Calu3 (cell line): ENCODE measurements at regions of chr3 and their contacts with region 1.

Region 1: GRCh38 chr3:46558184-46559043 is 7.7 kb downstream of the LRRC2 start:
- DNase-seq: peak; percentile 91
- H3K4me3 Mint-ChIP-seq: peak overlapping the region; percentile 80
- H3K27ac Mint-ChIP-seq: peak overlapping the region; percentile 51
- H3K4me1 Mint-ChIP-seq: peaks cover 23% of the 10 kb centered on the region
- H3K27me3 Mint-ChIP-seq: no peaks in the 10 kb centered on the region
- CTCF ChIP-seq: peak; percentile 53

Region 2: GRCh38 chr3:46423588-46423987 is 134.8 kb before region 1 on chr3:
- CTCF ChIA-PET with region 1: no interaction called
- intact Hi-C with region 1: no loop called
- DNase-seq: peak; percentile 42
- H3K4me3 Mint-ChIP-seq: no peak overlapping the region
- H3K27ac Mint-ChIP-seq: peak overlapping the region; percentile 63
- H3K4me1 Mint-ChIP-seq: peaks cover 26% of the 10 kb centered on the region
- H3K27me3 Mint-ChIP-seq: no peaks in the 10 kb centered on the region
- CTCF ChIP-seq: no peak

Region 3: DNA sequence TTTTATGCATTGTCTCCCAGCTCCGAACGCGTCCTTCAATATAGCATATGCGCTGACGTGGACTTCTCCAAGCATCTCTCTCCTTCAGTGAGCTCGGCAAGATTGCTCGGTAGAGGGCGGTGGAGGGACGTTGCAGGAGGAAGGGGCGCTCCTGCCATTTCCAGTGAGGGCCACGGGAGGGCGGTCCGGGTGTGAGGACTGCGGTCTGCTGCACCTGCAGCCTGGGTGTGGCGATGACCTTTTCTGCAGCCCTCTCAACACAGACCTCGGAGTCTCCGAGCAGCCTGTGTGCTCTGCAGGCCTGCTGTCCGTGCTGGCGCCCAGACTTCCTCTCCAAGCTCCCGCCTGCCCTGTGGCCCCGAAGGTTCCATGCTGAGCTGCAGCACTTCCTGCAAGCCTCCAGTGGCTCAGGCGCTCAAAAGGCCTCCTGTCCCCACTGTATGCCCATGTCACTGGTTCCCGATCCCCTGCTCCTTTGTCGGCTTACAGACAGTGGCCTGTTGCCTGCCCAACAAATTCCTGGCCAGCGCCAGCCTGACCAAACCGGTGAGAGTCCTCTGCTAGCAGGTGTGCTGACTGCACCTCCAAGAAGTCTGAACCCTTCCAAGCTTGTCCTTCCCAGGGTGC is 69.6 kb before region 1 on chr3:
- CTCF ChIA-PET with region 1: interaction called, 81 read pairs
- intact Hi-C with region 1: loop called (anchors 1 kb)
- DNase-seq: peak; percentile 96
- H3K4me3 Mint-ChIP-seq: peak overlapping the region; percentile 41
- H3K27ac Mint-ChIP-seq: peak overlapping the region; percentile 12
- H3K4me1 Mint-ChIP-seq: peaks cover 11% of the 10 kb centered on the region
- H3K27me3 Mint-ChIP-seq: peaks cover 1% of the 10 kb centered on the region
- CTCF ChIP-seq: peak; percentile 95

Region 4: GRCh38 chr3:46496741-46497554 is 61.5 kb before region 1 on chr3:
- CTCF ChIA-PET with region 1: interaction called, 11 read pairs
- intact Hi-C with region 1: loop called (anchors 2 kb)
- DNase-seq: peak; percentile 38
- H3K4me3 Mint-ChIP-seq: no peak overlapping the region
- H3K27ac Mint-ChIP-seq: no peak overlapping the region
- H3K4me1 Mint-ChIP-seq: no peaks in the 10 kb centered on the region
- H3K27me3 Mint-ChIP-seq: peaks cover 11% of the 10 kb centered on the region
- CTCF ChIP-seq: peak; percentile 30

Region 5: DNA sequence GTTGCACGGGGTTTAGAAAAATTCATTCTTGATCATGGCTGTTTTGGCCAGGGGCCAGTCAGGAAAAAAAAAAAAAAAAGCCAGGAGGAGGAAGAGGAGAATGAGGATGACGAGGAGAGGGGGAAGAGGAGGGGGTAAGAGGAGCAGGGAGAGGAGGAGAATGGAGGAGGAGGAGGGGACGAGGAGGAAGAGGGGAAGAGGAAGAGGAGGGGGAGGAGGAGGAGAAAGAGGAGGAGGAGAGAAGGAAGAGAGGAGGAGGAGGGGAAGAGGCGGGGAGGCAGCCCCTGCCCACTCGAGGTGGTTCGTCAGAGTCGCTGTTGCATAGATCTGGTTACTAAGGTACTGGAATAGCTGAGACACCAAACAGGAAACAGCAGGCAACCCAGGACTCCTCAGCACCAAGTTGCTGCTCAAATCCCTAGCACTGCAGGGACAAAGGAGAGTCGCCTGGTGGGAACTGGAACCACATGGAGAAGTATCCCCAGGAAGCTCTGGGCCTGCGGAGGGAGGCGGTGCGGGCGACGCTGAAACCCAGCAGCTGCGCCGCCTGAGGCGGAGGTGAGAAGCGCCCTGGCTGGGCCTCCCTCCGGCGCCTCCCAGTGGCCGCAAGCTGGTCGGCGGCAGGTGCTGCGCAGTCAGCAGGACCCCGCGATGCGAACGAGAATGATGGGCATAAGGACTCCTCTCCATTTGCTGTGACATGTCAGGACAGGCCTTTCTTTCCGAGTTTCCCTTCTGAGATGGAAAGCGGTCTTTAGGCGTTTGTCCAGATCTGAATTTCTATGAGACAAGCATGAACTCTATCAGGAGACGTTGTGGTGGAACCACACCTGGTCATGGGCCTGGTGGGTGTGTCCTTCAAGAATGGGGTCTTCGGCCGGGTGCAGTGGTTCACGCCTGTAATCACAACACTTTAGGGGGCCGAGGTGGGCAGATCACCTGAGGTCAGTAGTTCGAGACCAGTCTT is 71.4 kb after region 1 on chr3:
- CTCF ChIA-PET with region 1: interaction called, 13 read pairs
- intact Hi-C with region 1: no loop called
- DNase-seq: peak; percentile 85
- H3K4me3 Mint-ChIP-seq: no peak overlapping the region
- H3K27ac Mint-ChIP-seq: no peak overlapping the region
- H3K4me1 Mint-ChIP-seq: no peaks in the 10 kb centered on the region
- H3K27me3 Mint-ChIP-seq: peaks cover 32% of the 10 kb centered on the region
- CTCF ChIP-seq: peak; percentile 94